Activated CD8-positive, alpha-beta T cell treated with anti-CD3 and anti-CD28 coated beads, Interleukin-2, amount 10 ng/mL, durations not matched to agents 7 days and 5 days (primary cell): ENCODE measurements at regions of chr19 and their contacts with region 1.

Region 1: DNA sequence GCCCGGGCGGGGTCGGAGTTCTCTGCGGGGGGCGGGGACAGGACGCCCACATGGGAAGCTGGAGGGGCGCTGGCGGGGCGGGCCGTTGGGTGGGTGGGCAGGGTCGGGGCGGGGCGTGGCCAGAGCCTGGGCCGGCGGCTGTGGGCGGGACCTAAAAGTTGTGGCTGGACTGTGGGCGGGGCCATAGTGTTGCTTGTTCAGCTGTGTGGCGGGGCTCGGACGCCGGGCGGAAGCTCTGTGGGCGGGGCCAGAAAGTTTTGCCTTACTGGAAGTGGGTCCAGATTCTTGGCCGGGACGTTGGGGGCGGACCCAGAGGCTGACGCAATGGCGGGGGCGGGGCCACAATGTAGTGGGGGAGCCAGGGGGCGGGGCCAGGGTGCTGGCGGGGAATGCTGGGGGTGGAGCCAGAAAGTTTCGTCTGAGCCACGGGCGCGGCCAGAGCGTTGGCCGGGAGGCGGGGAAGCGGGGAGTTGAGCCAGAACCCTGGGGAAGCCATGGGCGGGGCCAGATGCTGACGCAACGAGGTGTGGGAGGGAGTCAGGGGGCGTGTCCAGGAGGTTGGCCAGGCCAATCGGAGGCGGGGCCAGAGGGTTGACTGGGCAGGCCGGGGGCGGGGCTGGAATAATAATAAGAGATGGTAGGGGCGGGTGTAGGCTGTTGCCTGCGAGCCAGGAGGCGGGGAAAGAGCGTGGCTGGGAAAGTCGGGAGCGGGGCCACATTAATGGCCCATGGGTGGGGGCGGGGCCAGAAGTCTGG is 541 bp downstream of the CCDC9 start:
- DNase-seq: peak; percentile 100
- ATAC-seq: peak; percentile 88
- H3K4me3 Mint-ChIP-seq: peak overlapping the region; percentile 87
- H3K27ac Mint-ChIP-seq: peak overlapping the region; percentile 97
- H3K4me1 Mint-ChIP-seq: peaks cover 43% of the 10 kb centered on the region
- H3K27me3 Mint-ChIP-seq: no peaks in the 10 kb centered on the region

Region 2: GRCh38 chr19:46564701-46565100 is 692.2 kb before region 1 on chr19:
- CTCF ChIA-PET with region 1: no interaction called
- POLR2A ChIA-PET with region 1: no interaction called
- DNase-seq: peak; percentile 15
- ATAC-seq: no peak
- H3K4me3 Mint-ChIP-seq: no peak overlapping the region
- H3K27ac Mint-ChIP-seq: no peak overlapping the region
- H3K4me1 Mint-ChIP-seq: peaks cover 2% of the 10 kb centered on the region
- H3K27me3 Mint-ChIP-seq: peaks cover 4% of the 10 kb centered on the region

Region 3: DNA sequence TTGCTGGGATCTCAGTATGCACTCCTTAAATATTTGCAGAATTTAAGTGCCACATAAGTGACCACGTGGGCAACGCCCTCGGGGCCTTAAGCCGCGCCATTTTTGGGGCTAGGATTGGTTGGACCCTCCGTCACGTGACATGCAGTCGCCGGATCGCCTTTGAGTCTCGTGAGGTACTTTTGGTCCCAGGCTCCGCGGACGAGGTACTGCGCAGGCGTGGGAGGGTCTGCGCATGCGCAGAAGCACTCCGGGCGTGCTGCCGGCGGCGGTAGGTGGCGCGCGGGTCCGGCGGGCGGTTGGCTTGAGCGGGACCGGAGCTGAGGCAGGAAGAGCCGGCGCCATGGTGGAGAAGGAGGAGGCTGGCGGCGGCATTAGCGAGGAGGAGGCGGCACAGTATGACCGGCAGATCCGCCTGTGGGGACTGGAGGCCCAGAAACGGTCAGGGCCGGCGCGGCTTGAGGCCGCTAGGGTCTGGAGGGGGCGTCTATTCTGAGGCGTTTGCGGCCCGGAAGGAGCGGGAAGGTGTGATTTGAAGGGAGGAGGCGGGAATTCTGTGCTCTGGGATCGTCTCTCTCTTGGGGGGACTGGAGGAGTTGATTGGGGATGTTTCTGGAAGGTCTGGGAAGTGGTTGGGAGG is 126.2 kb before region 1 on chr19 and contains the start of gene SAE1:
- CTCF ChIA-PET with region 1: no interaction called
- POLR2A ChIA-PET with region 1: interaction called, 11 read pairs
- DNase-seq: peak; percentile 94
- ATAC-seq: peak; percentile 91
- H3K4me3 Mint-ChIP-seq: peak within 1 kb of the TSS; percentile 99
- H3K27ac Mint-ChIP-seq: peak within 1 kb of the TSS; percentile 98
- H3K4me1 Mint-ChIP-seq: peaks cover 51% of the 10 kb centered on the region
- H3K27me3 Mint-ChIP-seq: no peaks in the 10 kb centered on the region
- total RNA-seq, gene SAE1: 165 to 175 TPM

Region 4: DNA sequence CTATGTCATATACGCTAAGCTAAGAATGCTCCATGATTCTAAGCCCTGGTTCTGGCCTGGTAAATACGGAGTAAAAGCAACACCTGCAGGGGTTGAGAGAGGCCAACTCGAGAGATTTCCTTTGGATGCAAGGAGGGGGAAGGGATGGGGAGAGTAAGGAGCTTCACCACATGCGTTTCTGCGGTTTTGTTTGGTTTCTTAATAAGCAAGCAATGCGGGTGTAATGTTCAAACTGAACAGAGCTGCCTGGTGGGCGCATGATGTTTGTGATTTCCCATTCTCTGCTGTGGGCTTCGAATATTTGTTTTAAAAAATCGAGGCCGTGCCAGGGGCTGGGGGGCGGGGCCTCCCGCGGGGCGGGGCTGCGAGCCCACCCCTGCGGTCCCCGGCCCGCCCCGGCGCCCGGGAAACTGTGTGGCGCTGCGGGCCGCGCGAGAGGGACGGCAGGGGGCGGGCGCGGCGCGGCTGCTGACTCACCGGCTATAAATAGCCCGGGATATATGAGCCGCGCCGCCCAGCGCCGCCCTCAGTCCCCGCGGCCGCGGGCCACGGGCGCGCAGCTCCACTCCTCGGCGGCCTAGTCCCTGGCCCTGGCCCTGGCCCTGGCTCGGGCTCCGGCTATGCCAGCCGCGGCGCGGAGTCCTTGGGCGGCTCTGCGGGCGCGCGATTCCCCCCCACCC is 31.0 kb before region 1 on chr19:
- CTCF ChIA-PET with region 1: interaction called, 4 read pairs
- POLR2A ChIA-PET with region 1: interaction called, 12 read pairs
- DNase-seq: peak; percentile 88
- ATAC-seq: peak; percentile 63
- H3K4me3 Mint-ChIP-seq: peak overlapping the region; percentile 37
- H3K27ac Mint-ChIP-seq: peak overlapping the region; percentile 90
- H3K4me1 Mint-ChIP-seq: peaks cover 20% of the 10 kb centered on the region
- H3K27me3 Mint-ChIP-seq: no peaks in the 10 kb centered on the region

Region 5: DNA sequence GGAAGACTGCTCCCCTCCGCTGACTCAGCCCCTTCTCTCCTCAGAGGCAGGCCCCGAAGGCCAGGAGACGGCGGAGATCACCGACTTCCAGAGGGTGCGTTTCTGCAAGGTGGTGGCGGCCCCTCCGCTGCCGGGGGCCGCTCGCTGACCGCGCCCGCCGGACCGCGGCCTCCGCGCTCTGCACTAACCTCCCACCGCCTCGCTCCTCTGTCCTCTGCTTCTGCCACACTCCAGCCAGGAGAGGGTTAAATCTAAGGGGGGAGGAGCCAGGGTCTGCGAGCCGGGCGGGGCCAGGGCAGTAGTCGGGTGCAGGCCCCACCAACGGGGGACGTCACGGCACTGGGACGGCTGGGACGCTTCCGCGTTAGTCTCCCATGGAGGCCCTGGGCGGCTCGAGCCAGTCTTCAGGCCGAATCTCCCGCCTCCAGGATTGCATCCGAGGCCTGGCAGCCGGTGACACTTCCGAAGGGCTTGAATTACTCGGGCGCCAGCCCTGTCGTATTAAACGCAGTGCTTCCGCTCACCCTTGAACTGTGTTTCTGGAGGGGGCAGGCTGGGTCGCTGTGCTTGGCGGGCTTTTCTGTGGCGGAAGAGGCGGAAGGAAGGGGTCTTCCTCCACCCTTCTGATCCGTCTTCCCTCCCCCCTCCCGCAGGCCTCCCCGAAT is 16.6 kb after region 1 on chr19:
- CTCF ChIA-PET with region 1: interaction called, 7 read pairs
- POLR2A ChIA-PET with region 1: interaction called, 43 read pairs
- DNase-seq: peak; percentile 94
- ATAC-seq: peak; percentile 80
- H3K4me3 Mint-ChIP-seq: peak overlapping the region; percentile 93
- H3K27ac Mint-ChIP-seq: peak overlapping the region; percentile 98
- H3K4me1 Mint-ChIP-seq: peaks cover 27% of the 10 kb centered on the region
- H3K27me3 Mint-ChIP-seq: no peaks in the 10 kb centered on the region

Region 6: GRCh38 chr19:47428177-47428894 is 171.5 kb after region 1 on chr19:
- CTCF ChIA-PET with region 1: no interaction called
- POLR2A ChIA-PET with region 1: no interaction called
- DNase-seq: peak; percentile 96
- ATAC-seq: peak; percentile 88
- H3K4me3 Mint-ChIP-seq: no peak overlapping the region
- H3K27ac Mint-ChIP-seq: no peak overlapping the region
- H3K4me1 Mint-ChIP-seq: peaks cover 31% of the 10 kb centered on the region
- H3K27me3 Mint-ChIP-seq: peaks cover 32% of the 10 kb centered on the region